Lower leg skin (tissue), 4 donors: ENCODE measurements at regions of chr7 and their contacts with region 1.

Region 1: GRCh38 chr7:101927802-101928201 is 110.4 kb downstream of the CUX1 start:
- DNase-seq: no peak
- H3K4me3 ChIP-seq: no peak overlapping the region
- CTCF ChIP-seq: no peak
- POLR2A ChIP-seq: no peak

Region 2: DNA sequence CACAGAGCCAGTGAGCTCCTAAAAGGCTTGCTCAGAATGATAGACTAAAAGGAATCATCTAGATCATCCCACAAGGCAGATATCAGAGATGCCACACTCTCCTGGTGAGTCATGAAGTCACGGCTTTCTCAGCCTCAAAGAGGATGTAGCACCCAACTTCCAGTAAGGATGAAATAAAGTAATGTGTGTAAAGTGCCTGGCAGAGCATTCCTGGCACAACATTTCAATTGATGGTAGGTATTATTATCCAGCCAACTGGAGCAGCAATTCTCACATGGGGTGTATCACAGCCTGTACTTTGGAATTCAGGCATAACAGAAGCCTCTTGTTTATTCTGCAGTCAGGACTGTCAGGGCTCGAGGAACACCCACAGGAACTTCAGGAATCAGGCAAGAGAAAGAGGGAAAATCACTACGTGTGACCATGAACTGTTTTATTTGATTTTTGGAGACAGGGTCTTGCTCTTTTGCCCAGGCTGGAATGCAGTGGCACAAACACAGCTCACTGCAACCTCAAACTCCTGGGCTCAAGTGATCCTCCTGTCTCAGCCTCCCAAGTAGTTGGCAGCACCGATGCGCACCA is 742.5 kb before region 1 on chr7:
- intact Hi-C with region 1: loop called (anchors 5 kb)
- DNase-seq: no peak
- H3K4me3 ChIP-seq: no peak overlapping the region
- CTCF ChIP-seq: no peak
- POLR2A ChIP-seq: no peak

Region 3: GRCh38 chr7:101911800-101912715 is 15.7 kb before region 1 on chr7:
- intact Hi-C with region 1: no loop called
- DNase-seq: no peak
- H3K4me3 ChIP-seq: no peak overlapping the region
- CTCF ChIP-seq: no peak
- POLR2A ChIP-seq: no peak